Activated CD8-positive, alpha-beta T cell treated with anti-CD3 and anti-CD28 coated beads, Interleukin-2, amount 10 ng/mL, durations not matched to agents 7 days and 5 days (primary cell): ENCODE measurements at regions of chr17 and their contacts with region 1.

Region 1: GRCh38 chr17:2253768-2254406 is 49.7 kb downstream of the SMG6 start:
- DNase-seq: peak; percentile 57
- ATAC-seq: peak; percentile 80
- H3K4me3 Mint-ChIP-seq: peak overlapping the region; percentile 46
- H3K27ac Mint-ChIP-seq: peak overlapping the region; percentile 92
- H3K4me1 Mint-ChIP-seq: peaks cover 78% of the 10 kb centered on the region
- H3K27me3 Mint-ChIP-seq: no peaks in the 10 kb centered on the region

Region 2: GRCh38 chr17:2266045-2266864 is 12.4 kb after region 1 on chr17:
- CTCF ChIA-PET with region 1: interaction called, 21 read pairs
- POLR2A ChIA-PET with region 1: interaction called, 97 read pairs
- DNase-seq: peak; percentile 96
- ATAC-seq: peak; percentile 82
- H3K4me3 Mint-ChIP-seq: peak overlapping the region; percentile 74
- H3K27ac Mint-ChIP-seq: peak overlapping the region; percentile 99
- H3K4me1 Mint-ChIP-seq: peaks cover 88% of the 10 kb centered on the region
- H3K27me3 Mint-ChIP-seq: no peaks in the 10 kb centered on the region